Posterior vena cava (tissue), 2 donors: ENCODE measurements at regions of chr20 and their contacts with region 1.

Region 1: DNA sequence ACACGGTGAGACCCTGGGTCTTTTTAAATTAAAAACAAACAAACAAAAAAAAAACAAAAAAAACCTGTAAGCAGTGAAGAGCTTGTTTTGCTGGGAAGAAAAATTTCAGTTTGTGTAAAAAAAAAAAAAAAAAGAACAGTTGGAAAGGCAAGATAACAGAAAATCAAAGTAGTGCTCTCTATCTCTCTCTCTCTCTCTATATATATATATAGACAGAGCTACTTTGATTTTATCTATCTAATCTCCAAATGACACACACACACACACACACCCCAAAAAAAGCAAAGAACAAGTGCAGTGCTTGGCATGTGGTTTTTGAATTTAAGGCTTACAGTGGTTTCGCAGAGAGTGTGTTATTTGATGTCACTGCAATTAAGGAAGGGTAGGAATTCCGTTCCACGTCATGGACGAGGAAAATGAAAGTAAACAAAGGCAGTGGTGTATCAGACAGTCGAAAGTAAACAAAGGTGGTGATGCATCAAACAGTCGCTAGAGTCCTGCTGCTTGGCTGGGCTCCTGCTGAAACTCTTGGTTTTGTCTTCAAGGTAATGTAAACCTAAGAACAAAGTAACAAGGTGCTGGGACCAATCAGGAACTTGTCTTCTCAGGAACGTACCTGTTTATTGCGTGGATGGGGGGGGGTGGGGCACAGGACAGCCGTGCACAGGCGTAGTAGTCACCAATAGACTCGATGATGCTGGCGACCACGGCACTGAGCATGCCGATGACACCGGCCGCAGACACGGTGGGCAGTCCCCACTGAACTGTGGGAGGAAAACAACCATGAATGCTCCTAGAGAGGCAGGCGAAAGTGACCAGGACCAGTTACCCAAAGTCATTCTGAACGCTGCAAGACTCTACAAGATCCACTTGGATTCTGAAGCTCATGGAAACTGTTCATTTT is 131.8 kb downstream of the SLC23A2 start:
- DNase-seq: no peak

Region 2: GRCh38 chr20:3190681-3191111 is 1678.8 kb before region 1 on chr20:
- intact Hi-C with region 1: loop called in 1 of 2 experiments (anchors 10 kb)
- DNase-seq: no peak

Region 3: GRCh38 chr20:3658716-3659491 is 1210.6 kb before region 1 on chr20:
- intact Hi-C with region 1: loop called in 1 of 2 experiments (anchors 10 kb)
- DNase-seq: peak; percentile 42

Region 4: GRCh38 chr20:4912380-4913142 is 43.0 kb after region 1 on chr20:
- intact Hi-C with region 1: no loop called
- DNase-seq: no peak